Activated T-helper 1 cell treated with anti-CD3 and anti-CD28 coated beads, Interleukin-12 subunit alpha, Interleukin-12 subunit beta, Interleukin-2, Interleukin-4 antibody, amounts not matched to agents 30 ng/mL and 10 ng/mL and 1 ng/mL, durations not matched to agents 14 hours and 24 hours and 36 hours (primary cell): ENCODE measurements at regions of chr6 and their contacts with region 1.

Region 1: GRCh38 chr6:44172731-44173500 is 14.3 kb downstream of the CAPN11 start:
- DNase-seq: peak; percentile 64
- H3K4me3 Mint-ChIP-seq: no peak overlapping the region
- H3K27ac Mint-ChIP-seq: peak overlapping the region; percentile 45
- H3K4me1 Mint-ChIP-seq: peaks cover 12% of the 10 kb centered on the region
- H3K27me3 Mint-ChIP-seq: peaks cover 7% of the 10 kb centered on the region

Region 2: DNA sequence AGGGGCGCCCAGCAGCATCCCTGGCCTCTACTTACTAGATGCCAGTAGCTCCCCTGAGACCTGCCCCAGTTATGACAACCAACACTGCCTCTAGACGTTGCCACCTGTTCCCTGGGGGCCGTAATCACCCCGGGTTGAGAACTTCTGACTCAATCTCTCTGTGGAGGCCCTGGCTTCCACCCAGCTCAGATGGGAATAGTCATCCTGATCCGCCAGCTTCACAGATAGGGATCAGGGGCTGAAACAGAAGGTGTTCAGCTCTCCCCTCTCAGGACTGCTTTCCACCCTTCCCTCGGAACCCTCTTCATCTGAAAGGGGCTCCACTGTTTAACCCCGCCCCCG is 10.9 kb before region 1 on chr6:
- intact Hi-C with region 1: no loop called
- DNase-seq: no peak
- H3K4me3 Mint-ChIP-seq: no peak overlapping the region
- H3K27ac Mint-ChIP-seq: no peak overlapping the region
- H3K4me1 Mint-ChIP-seq: peaks cover 5% of the 10 kb centered on the region
- H3K27me3 Mint-ChIP-seq: peaks cover 10% of the 10 kb centered on the region

Region 3: GRCh38 chr6:44201638-44202303 is 28.9 kb after region 1 on chr6:
- intact Hi-C with region 1: no loop called
- DNase-seq: no peak
- H3K4me3 Mint-ChIP-seq: no peak overlapping the region
- H3K27ac Mint-ChIP-seq: no peak overlapping the region
- H3K4me1 Mint-ChIP-seq: no peaks in the 10 kb centered on the region
- H3K27me3 Mint-ChIP-seq: peaks cover 2% of the 10 kb centered on the region

Region 4: GRCh38 chr6:44221291-44221960 is 48.5 kb after region 1 on chr6:
- intact Hi-C with region 1: loop called (anchors 1 kb)
- DNase-seq: peak; percentile 68
- H3K4me3 Mint-ChIP-seq: no peak overlapping the region
- H3K27ac Mint-ChIP-seq: peak overlapping the region; percentile 52
- H3K4me1 Mint-ChIP-seq: peaks cover 43% of the 10 kb centered on the region
- H3K27me3 Mint-ChIP-seq: peaks cover 11% of the 10 kb centered on the region

Region 5: DNA sequence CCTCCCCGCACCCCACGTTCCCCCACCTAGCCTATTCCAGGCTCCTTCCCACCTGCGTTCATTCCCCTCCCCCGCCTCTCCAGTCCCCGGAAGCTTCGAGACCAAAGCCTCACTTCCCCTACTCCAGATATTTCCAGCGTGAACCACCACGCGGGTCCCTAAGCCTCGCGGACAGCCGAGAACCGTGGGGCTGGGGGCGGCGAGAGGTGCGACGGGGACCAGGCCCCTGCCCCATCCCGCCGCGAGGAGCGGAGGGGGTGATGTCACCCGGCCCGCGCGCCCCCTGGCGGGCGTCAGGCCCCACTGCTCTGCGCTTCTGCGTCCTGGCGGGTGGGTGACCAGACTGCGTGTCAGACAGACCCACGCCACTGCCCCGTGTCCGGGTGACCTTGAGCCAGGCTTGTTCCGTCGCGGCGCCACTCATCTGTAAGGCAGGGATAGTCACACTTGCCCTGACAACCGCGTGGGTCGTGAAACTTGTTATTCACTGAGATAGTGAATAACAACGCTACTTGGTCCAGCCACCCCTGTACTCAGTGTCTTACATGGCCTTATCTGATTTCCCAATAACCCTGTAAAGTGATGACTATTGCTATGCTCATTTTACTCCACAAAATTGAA is 65.0 kb after region 1 on chr6:
- intact Hi-C with region 1: loop called (anchors 1 kb)
- DNase-seq: peak; percentile 79
- H3K4me3 Mint-ChIP-seq: peak overlapping the region; percentile 82
- H3K27ac Mint-ChIP-seq: peak overlapping the region; percentile 86
- H3K4me1 Mint-ChIP-seq: peaks cover 13% of the 10 kb centered on the region
- H3K27me3 Mint-ChIP-seq: no peaks in the 10 kb centered on the region

Region 6: GRCh38 chr6:44257025-44257752 is 84.3 kb after region 1 on chr6 and contains the start of gene SLC35B2:
- intact Hi-C with region 1: loop called (anchors 1 kb)
- DNase-seq: peak; percentile 70
- H3K4me3 Mint-ChIP-seq: peak within 1 kb of the TSS; percentile 90
- H3K27ac Mint-ChIP-seq: peak within 1 kb of the TSS; percentile 81
- H3K4me1 Mint-ChIP-seq: peaks cover 75% of the 10 kb centered on the region
- H3K27me3 Mint-ChIP-seq: no peaks in the 10 kb centered on the region
- total RNA-seq, gene SLC35B2: 29.2 and 30.1 TPM in 2 replicates

Region 7: DNA sequence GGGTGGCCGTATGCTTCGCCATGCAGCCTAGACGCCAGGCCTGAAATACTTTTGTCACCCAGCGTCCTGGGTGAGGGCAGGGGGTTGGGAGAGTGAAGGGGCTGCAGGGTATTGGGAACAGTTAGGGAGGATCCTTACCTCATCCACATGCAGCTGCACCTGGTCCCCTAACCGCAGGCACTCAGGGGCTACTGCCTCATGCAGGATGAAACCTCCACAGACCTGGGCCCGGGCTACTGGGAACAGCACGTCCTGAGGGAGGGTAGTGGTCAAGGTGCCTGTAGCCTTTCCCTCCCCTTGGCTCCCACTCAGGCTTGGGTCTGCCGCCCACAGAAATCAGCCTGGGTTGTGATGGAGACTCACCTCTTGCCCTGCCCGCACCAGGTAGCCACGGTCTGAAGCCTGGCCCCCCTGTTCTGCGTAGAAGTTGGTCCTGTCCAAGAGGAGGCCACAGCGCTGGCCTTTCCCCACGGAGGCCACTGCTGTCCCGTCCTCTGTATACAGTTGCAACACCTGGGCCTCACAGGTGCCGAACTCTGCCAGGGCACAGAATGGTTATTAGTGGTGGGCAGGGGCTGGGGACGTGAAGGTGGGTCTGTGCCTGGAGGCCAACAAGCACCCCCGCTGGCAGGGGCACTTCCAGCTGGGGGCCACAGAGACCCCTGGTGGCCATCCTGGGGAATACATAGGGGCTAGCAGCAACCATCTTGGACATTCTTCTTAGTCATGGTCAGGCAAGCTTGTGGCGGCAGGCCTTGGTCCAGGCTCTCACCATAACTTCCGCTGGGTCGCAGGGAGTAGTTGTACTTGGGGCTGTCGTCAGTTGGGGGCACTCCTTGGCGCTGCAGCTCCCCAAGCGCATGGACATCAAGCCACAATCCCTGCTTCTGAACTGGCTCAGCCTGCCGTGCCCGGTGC is 131.6 kb after region 1 on chr6:
- intact Hi-C with region 1: loop called (anchors 1 kb)
- DNase-seq: no peak
- H3K4me3 Mint-ChIP-seq: no peak overlapping the region
- H3K27ac Mint-ChIP-seq: no peak overlapping the region
- H3K4me1 Mint-ChIP-seq: no peaks in the 10 kb centered on the region
- H3K27me3 Mint-ChIP-seq: peaks cover 2% of the 10 kb centered on the region

Region 8: GRCh38 chr6:44338228-44339122 is 165.6 kb after region 1 on chr6:
- intact Hi-C with region 1: loop called (anchors 1 kb)
- DNase-seq: peak; percentile 55
- H3K4me3 Mint-ChIP-seq: no peak overlapping the region
- H3K27ac Mint-ChIP-seq: no peak overlapping the region
- H3K4me1 Mint-ChIP-seq: peaks cover 7% of the 10 kb centered on the region
- H3K27me3 Mint-ChIP-seq: peaks cover 32% of the 10 kb centered on the region